ENCODE measurements at regions of chr11 and their contacts with region 1.

Region 1: GRCh38 chr11:103202048-103202651 is 92.9 kb downstream of the DYNC2H1 start:
- DNase-seq: no peak
- ATAC-seq: peak; percentile 62; the same call in 1 of the 2 replicates
- H3K4me3 ChIP-seq: no peak overlapping the region
- H3K27ac ChIP-seq: no peak overlapping the region
- H3K4me1 ChIP-seq: no peaks in the 10 kb centered on the region
- H3K27me3 ChIP-seq: no peaks in the 10 kb centered on the region
- CTCF ChIP-seq: peak; percentile 77; the same call in 1 of the 2 replicates

Region 2: DNA sequence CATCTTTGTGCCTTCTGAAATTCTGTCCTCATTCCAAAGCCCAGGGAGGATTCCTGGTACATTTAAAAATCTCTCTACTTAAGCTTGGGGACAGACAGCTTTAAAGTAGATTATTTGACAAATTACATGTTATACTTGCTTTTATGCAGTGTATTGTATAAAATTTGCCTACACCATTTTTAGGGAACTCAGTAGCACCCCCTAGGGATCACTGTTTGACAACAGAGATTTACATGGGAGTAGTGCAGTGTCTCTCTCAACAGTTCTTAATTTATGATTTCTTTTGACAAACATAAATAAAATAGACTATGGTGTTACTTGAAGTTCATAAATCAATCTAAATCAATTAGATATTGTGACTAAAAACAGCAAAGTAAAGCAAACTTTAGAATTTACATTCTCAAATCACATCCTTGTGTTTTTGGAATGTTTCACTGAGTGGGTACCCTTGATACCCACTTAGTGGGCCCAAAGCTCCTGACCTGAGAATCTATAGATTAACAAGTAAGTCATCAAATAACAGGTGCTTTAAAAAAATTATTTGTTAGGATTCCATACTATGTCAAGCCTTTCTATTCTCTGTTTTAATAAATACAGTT is 335.9 kb after region 1 on chr11:
- CTCF ChIA-PET with region 1: no interaction called
- POLR2A ChIA-PET with region 1: no interaction called
- in situ Hi-C with region 1: no loop called
- intact Hi-C with region 1: loop called (anchors 5 kb)
- DNase-seq: no peak
- ATAC-seq: no peak
- H3K4me3 ChIP-seq: no peak overlapping the region
- H3K27ac ChIP-seq: no peak overlapping the region
- H3K4me1 ChIP-seq: no peaks in the 10 kb centered on the region
- H3K27me3 ChIP-seq: no peaks in the 10 kb centered on the region; the same call in 1 of the 2 replicates
- CTCF ChIP-seq: peak; percentile 76; the same call in 1 of the 2 replicates

Region 3: DNA sequence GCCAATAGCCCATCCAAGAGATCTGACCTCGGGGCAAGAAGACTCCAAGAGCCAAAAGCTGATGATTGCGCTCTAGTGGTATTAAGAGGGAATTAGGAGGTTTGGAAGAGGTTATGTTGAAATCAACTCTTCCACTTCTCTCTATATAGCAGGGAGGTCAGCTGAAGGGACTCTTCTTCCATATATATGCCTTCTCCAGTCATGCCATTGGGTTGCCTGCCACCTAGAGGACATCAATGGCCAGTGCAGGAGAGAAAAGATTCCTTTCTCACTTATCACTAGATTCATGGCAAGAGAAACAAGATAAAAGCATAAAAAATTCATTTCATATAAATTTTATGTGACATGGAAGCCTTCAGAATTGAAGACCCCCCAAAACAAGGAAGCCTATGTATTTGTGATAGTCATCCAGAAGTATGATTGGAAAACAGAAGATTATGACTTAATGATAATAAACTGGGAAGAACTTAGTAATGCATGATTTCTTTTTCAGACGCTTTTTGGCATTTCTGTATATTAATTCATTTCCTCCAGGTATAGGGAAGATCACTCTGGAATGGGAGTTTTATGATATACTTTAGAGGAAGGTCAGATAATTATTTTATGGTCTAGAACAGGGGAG is 399.2 kb after region 1 on chr11:
- CTCF ChIA-PET with region 1: interaction called, 4 read pairs
- POLR2A ChIA-PET with region 1: no interaction called
- in situ Hi-C with region 1: no loop called
- intact Hi-C with region 1: loop called (anchors 1 kb)
- DNase-seq: peak; percentile 24
- ATAC-seq: peak; percentile 92
- H3K4me3 ChIP-seq: no peak overlapping the region
- H3K27ac ChIP-seq: no peak overlapping the region
- H3K4me1 ChIP-seq: no peaks in the 10 kb centered on the region
- H3K27me3 ChIP-seq: peaks cover 3% of the 10 kb centered on the region
- CTCF ChIP-seq: peak; percentile 92

Region 4: GRCh38 chr11:104151404-104152204 is 949.5 kb after region 1 on chr11:
- CTCF ChIA-PET with region 1: no interaction called
- POLR2A ChIA-PET with region 1: no interaction called
- in situ Hi-C with region 1: no loop called
- intact Hi-C with region 1: loop called (anchors 10 kb)
- DNase-seq: no peak
- ATAC-seq: no peak
- H3K4me3 ChIP-seq: no peak overlapping the region
- H3K27ac ChIP-seq: no peak overlapping the region
- H3K4me1 ChIP-seq: no peaks in the 10 kb centered on the region
- H3K27me3 ChIP-seq: no peaks in the 10 kb centered on the region
- CTCF ChIP-seq: peak; percentile 47; the same call in 1 of the 2 replicates